Activated CD8-positive, alpha-beta T cell treated with anti-CD3 and anti-CD28 coated beads for 36 hours (primary cell): ENCODE measurements at regions of chr12 and their contacts with region 1.

Region 1: DNA sequence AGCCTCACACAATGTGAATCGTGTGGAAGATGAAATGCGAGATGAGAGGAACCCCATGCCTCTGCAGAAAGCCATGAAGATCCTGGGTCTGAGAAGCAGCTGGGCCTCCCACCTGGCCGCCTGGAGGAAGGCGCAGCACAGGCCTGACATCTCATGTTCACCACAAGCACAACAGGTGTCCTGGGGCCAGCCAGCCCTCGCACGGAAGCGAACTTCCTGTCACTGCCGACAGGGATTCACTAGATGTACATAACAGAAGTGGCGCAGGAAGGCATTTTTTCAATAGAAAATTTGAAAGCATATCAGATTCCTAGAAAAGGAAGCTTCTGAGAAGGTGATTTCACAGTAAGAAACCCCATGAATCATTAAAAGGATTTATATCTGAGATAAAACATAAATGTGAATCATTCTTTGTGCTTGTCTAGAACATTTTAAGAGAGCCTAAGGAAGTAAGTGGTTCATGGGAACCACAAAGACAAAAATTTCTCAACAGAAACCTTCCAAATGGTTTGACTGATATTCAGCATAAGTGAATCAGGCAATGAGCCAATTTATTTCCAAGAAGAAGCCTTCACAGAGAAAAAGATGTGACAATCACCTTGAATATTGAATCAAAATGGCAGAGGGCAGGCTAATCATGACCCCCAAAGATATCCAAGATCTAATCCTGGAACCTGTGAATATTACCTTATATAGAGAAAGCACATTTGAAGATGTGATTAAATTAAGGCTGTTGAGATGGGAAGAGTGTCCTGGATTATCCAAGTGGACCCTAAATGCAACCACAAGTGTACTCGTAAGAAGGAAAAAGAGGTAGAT is 311.9 kb downstream of the DUSP6 start:
- DNase-seq: peak; percentile 96
- ATAC-seq: peak; percentile 87
- H3K4me3 Mint-ChIP-seq: peak overlapping the region; percentile 43
- H3K27ac Mint-ChIP-seq: peak overlapping the region; percentile 100
- H3K4me1 Mint-ChIP-seq: peaks cover 58% of the 10 kb centered on the region
- H3K27me3 Mint-ChIP-seq: peaks cover 2% of the 10 kb centered on the region
- CTCF ChIP-seq: no peak

Region 2: DNA sequence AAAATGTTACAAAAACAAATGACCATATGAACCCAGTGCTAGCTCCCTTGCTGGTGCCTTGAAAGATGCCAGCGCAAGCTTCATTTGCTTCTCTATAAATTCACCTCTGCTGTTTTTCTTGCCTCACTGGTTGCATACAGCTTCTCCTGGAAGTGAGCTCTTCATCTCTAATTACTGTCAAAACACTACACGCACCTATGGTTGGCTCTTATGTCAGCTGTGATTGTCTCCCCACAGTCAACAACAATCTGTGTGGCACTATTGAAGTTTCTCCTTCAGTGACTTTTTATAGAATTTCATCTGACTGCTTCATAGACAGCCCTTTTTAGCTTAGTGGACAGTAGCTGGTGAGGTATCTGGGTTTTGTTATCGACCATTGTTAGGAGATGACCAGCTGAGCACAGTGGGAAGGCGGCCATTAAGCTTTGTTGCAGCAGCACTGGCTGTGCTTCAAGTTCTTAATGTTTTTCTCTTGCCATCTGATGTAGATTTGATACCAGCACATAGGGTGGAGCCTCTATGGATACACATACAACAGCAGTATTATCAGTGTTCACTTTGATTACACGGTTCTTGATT is 591.9 kb before region 1 on chr12:
- CTCF ChIA-PET with region 1: no interaction called
- POLR2A ChIA-PET with region 1: no interaction called
- intact Hi-C with region 1: no loop called
- DNase-seq: no peak
- ATAC-seq: no peak
- H3K4me3 Mint-ChIP-seq: no peak overlapping the region
- H3K27ac Mint-ChIP-seq: no peak overlapping the region
- H3K4me1 Mint-ChIP-seq: no peaks in the 10 kb centered on the region
- H3K27me3 Mint-ChIP-seq: no peaks in the 10 kb centered on the region
- CTCF ChIP-seq: no peak

Region 3: GRCh38 chr12:88934163-88934747 is 106.1 kb before region 1 on chr12:
- CTCF ChIA-PET with region 1: no interaction called
- POLR2A ChIA-PET with region 1: no interaction called
- intact Hi-C with region 1: no loop called
- DNase-seq: no peak
- ATAC-seq: no peak
- H3K4me3 Mint-ChIP-seq: no peak overlapping the region
- H3K27ac Mint-ChIP-seq: no peak overlapping the region
- H3K4me1 Mint-ChIP-seq: no peaks in the 10 kb centered on the region
- H3K27me3 Mint-ChIP-seq: peaks cover 4% of the 10 kb centered on the region
- CTCF ChIP-seq: no peak

Region 4: GRCh38 chr12:89029961-89030360 is 10.4 kb before region 1 on chr12:
- CTCF ChIA-PET with region 1: interaction called, 8 read pairs
- POLR2A ChIA-PET with region 1: interaction called, 12 read pairs
- intact Hi-C with region 1: no loop called
- DNase-seq: no peak
- ATAC-seq: no peak
- H3K4me3 Mint-ChIP-seq: no peak overlapping the region
- H3K27ac Mint-ChIP-seq: no peak overlapping the region
- H3K4me1 Mint-ChIP-seq: peaks cover 26% of the 10 kb centered on the region
- H3K27me3 Mint-ChIP-seq: peaks cover 9% of the 10 kb centered on the region
- CTCF ChIP-seq: no peak

Region 5: DNA sequence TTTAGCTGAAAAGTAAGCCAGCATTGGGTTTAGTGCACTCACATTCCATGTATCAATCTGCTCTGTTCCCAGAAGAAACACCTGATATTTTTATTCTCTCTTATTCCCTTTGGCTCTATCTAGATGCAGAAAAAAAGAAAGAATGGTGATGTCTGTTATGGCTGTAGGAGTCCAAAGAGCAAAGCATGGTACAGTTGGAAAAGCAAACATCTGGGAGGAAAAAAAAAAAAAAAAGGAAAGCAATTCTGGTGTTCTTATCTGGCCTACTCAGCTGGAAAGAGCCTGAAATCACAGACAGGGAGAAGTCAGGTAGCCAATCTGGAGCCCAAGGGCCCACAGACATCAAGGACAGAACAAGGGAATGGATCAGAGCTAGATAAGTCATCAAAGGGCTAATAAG is 18.0 kb after region 1 on chr12:
- CTCF ChIA-PET with region 1: no interaction called
- POLR2A ChIA-PET with region 1: no interaction called
- intact Hi-C with region 1: no loop called
- DNase-seq: no peak
- ATAC-seq: no peak
- H3K4me3 Mint-ChIP-seq: no peak overlapping the region
- H3K27ac Mint-ChIP-seq: no peak overlapping the region
- H3K4me1 Mint-ChIP-seq: peaks cover 8% of the 10 kb centered on the region
- H3K27me3 Mint-ChIP-seq: peaks cover 4% of the 10 kb centered on the region
- CTCF ChIP-seq: no peak

Region 6: DNA sequence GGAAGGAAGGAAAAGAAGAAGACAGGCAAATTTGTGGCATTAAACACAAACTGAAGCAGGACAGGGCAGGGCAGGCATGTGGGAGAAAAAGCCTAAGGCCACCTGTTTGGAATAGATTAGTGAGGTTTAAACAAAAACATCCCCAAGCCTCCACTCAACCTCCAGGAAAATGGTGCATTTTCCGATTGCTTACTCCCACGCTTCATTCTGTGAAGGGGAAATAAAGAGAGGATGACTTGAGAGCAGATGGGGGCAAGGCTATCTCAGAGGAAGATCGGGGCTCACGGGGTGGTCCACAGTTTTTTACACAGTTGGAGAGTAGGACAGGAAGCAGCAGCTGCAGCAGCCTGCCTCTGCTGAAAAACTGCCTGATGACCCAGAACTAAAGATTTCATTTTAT is 61.1 kb after region 1 on chr12:
- CTCF ChIA-PET with region 1: no interaction called
- POLR2A ChIA-PET with region 1: no interaction called
- intact Hi-C with region 1: no loop called
- DNase-seq: no peak
- ATAC-seq: no peak
- H3K4me3 Mint-ChIP-seq: no peak overlapping the region
- H3K27ac Mint-ChIP-seq: no peak overlapping the region
- H3K4me1 Mint-ChIP-seq: no peaks in the 10 kb centered on the region
- H3K27me3 Mint-ChIP-seq: peaks cover 5% of the 10 kb centered on the region
- CTCF ChIP-seq: no peak

Region 7: GRCh38 chr12:89162704-89163261 is 122.4 kb after region 1 on chr12:
- CTCF ChIA-PET with region 1: interaction called, 3 read pairs
- POLR2A ChIA-PET with region 1: no interaction called
- intact Hi-C with region 1: loop called (anchors 5 kb)
- DNase-seq: peak; percentile 79
- ATAC-seq: peak; percentile 94
- H3K4me3 Mint-ChIP-seq: no peak overlapping the region
- H3K27ac Mint-ChIP-seq: no peak overlapping the region
- H3K4me1 Mint-ChIP-seq: peaks cover 6% of the 10 kb centered on the region
- H3K27me3 Mint-ChIP-seq: no peaks in the 10 kb centered on the region
- CTCF ChIP-seq: no peak

Region 8: DNA sequence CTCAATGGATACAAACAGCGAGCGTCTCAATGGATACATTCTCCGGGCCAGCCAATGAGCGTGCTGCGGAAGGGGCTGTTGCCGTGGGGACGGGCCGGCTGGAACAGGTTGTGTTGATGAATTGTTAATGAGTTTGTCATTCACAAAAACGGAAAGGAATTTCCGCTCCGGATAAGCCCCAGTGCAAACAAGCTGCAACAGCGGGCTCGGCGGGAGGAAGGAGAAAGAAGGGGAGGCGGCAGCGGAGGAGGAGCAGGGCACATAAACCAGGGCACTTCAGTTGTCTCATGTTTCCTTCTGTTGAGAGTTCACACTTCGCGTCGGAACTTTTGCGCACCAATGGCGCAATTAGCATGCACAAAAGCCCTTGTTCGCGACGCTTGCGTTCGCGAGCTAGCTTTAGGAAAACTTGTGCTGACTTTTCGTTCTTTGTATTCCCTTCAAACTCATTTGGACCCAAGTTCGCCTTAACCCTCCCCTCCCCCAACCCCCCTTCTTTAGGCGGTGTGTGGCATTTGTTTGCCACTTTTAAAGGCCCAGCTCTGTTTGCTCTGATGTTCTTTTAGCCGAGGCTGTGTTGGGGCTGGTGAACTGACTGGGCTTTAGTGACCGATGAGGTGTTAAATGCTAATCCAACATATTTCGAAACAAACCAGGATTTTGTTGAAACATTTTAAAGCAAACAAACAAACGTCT is 312.3 kb after region 1 on chr12 and contains the start of gene DUSP6:
- CTCF ChIA-PET with region 1: interaction called, 10 read pairs
- POLR2A ChIA-PET with region 1: interaction called, 6 read pairs
- intact Hi-C with region 1: loop called (anchors 5 kb)
- DNase-seq: peak; percentile 95
- ATAC-seq: peak; percentile 83
- H3K4me3 Mint-ChIP-seq: peak within 1 kb of the TSS; percentile 94
- H3K27ac Mint-ChIP-seq: peak within 1 kb of the TSS; percentile 93
- H3K4me1 Mint-ChIP-seq: peaks cover 35% of the 10 kb centered on the region
- H3K27me3 Mint-ChIP-seq: peaks cover 16% of the 10 kb centered on the region
- CTCF ChIP-seq: no peak
- total RNA-seq, gene DUSP6: 15.3 to 16.6 TPM

Region 9: GRCh38 chr12:89461649-89462612 is 421.6 kb after region 1 on chr12:
- CTCF ChIA-PET with region 1: interaction called, 11 read pairs
- POLR2A ChIA-PET with region 1: no interaction called
- intact Hi-C with region 1: loop called (anchors 5 kb)
- DNase-seq: no peak
- ATAC-seq: peak; percentile 91
- H3K4me3 Mint-ChIP-seq: peak overlapping the region; percentile 46
- H3K27ac Mint-ChIP-seq: peak overlapping the region; percentile 79
- H3K4me1 Mint-ChIP-seq: peaks cover 32% of the 10 kb centered on the region
- H3K27me3 Mint-ChIP-seq: no peaks in the 10 kb centered on the region
- CTCF ChIP-seq: peak; percentile 76

Region 10: GRCh38 chr12:89470741-89471509 is 430.6 kb after region 1 on chr12:
- CTCF ChIA-PET with region 1: interaction called, 6 read pairs
- POLR2A ChIA-PET with region 1: interaction called, 20 read pairs
- intact Hi-C with region 1: loop called (anchors 5 kb)
- DNase-seq: no peak
- ATAC-seq: peak; percentile 43
- H3K4me3 Mint-ChIP-seq: no peak overlapping the region
- H3K27ac Mint-ChIP-seq: peak overlapping the region; percentile 80
- H3K4me1 Mint-ChIP-seq: peaks cover 65% of the 10 kb centered on the region
- H3K27me3 Mint-ChIP-seq: no peaks in the 10 kb centered on the region
- CTCF ChIP-seq: peak; percentile 62

Region 11: GRCh38 chr12:89524541-89525285 is 484.4 kb after region 1 on chr12 and contains the start of gene GALNT4:
- CTCF ChIA-PET with region 1: interaction called, 6 read pairs
- POLR2A ChIA-PET with region 1: interaction called, 7 read pairs
- intact Hi-C with region 1: loop called (anchors 5 kb)
- DNase-seq: peak; percentile 80
- ATAC-seq: peak; percentile 59
- H3K4me3 Mint-ChIP-seq: peak within 1 kb of the TSS; percentile 98
- H3K27ac Mint-ChIP-seq: peak within 1 kb of the TSS; percentile 99
- H3K4me1 Mint-ChIP-seq: peaks cover 58% of the 10 kb centered on the region
- H3K27me3 Mint-ChIP-seq: no peaks in the 10 kb centered on the region
- CTCF ChIP-seq: peak; percentile 65
- total RNA-seq, gene GALNT4: 5.9 to 6.4 TPM